GM10248 (cell line): ENCODE measurements at regions of chr10 and their contacts with region 1.

Region 1: DNA sequence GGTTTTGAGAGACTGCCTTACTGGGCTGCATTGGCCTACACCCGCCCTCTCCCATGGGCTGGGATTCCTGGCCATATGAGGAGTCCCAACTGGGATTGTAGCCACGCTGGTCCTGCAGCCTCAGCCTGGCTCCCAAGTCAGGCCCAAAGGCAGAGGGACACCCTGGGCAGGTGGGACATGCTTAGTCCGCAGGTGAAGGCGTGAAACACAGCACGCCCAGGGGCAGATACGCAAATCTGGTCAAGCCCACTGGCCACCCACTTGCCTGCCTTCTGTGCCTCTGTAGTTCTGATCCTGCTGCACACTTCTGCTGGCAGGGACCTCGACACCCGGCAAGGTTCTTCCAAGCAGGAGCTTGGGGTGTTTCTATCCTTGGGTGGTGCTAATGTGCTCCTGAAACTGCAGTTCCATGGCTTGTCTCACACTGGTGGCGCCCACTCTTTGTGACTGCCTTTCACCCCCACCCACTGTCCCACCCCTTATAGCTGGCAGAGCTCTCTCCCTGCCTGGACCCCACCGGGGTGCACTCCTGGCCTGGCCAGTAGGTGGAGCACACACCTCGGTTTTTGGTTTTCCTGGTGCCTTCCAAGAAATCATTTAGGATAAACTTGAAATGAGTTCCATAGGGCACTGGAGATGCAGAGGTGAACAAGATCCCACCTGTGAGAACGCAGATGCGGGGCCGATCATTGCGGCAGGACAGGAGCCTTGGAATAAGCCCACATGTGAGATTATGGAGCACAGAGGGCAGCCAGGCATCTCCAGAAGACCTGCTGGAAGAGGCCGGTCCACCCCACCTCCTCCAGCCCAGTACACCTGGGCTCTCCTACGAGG is 47.9 kb downstream of the MKI67 start:
- DNase-seq: peak; percentile 74
- CTCF ChIP-seq: peak; percentile 79

Region 2: GRCh38 chr10:127797339-127797738 is 281.0 kb before region 1 on chr10:
- CTCF ChIA-PET with region 1: no interaction called
- POLR2A ChIA-PET with region 1: interaction called, 11 read pairs
- DNase-seq: peak; percentile 39
- CTCF ChIP-seq: no peak

Region 3: DNA sequence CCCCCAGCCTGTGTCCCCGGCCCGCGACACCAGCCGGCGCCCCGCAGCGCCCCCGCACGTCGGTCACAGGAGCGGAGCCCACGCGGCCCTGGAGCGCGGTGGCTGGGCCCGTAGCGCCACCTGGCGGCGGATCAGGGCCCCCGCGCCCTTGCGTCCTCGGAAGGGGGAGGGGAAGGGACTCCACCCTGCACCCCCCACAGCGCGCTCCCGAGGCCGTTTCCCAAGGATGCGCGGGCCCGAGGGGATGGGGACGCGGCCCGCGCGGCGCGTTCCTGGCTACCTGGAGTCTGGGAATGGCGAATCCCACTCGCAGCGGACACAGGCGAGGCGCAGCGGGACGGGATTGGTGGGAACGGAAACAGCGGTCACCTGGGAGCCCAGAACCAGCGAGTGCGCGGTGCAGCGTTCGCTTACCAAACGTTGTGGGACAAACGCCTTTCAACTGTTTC is 71.7 kb after region 1 on chr10:
- CTCF ChIA-PET with region 1: interaction called, 70 read pairs
- POLR2A ChIA-PET with region 1: no interaction called
- DNase-seq: peak; percentile 92
- CTCF ChIP-seq: peak; percentile 100